ENCODE measurements at regions of chr9 and their contacts with region 1.

Region 1: DNA sequence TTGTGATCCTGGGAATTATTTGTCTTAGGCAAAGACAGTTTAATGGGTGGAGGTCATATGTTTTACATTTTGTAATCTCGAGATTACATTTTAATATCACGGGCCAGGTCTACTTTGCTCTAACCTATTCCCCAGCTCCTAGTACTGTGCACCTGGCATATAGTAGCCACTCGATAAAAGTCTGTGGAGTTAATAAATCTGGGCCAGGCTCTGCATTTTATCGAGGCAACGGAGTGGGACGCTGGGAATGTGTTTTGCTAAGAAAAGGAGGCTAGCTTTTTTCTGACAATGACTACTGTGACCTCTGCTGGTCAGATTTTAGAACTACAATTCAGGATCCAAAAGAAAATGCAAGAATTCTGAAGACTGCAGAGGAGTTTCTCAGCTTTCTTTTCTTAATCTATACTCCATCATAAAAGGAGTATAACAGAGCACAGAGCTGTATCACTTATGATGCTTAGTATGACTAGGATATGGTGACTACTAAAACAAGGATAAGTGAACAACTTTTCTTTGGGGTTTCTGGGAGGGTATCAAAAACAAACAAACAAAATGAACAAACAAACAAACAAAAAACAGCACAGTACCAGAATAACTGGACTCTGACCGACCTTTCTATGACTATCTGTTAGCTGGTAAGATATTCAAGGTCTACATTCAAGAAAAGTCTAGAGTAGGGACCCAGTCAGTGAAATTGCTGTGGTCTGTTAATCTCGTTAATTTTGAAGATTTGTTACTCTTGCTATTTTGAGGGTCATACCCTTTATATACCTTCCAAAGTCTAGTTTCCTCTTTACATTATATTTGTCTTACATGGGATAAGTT is 46.1 kb upstream of the CER1 start:
- DNase-seq: peak; percentile 69
- H3K4me3 Mint-ChIP-seq: no peak overlapping the region
- H3K27ac Mint-ChIP-seq: no peak overlapping the region
- H3K4me1 Mint-ChIP-seq: no peaks in the 10 kb centered on the region
- H3K27me3 Mint-ChIP-seq: peaks cover 17% of the 10 kb centered on the region

Region 2: DNA sequence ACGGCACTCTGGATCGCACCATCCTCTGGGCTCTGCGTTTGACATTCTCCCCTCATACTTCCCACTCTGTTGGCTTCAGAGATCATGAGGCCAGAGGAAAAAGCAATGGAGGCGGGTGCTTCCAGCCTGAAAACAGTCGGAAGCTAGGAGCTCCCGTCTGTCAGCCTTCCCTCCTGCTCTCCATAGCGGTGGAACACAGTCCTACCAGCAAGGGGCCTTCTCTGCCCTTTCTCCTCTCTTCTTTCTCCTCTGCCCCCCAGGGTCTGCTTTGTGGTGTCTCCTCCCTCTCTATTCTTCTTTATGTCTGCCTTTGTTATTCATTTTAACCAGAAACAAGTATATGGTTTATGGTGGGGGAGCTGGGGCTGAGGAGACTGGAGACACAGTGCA is 302.2 kb before region 1 on chr9:
- intact Hi-C with region 1: loop called (anchors 10 kb)
- DNase-seq: no peak
- H3K4me3 Mint-ChIP-seq: no peak overlapping the region
- H3K27ac Mint-ChIP-seq: no peak overlapping the region
- H3K4me1 Mint-ChIP-seq: no peaks in the 10 kb centered on the region
- H3K27me3 Mint-ChIP-seq: no peaks in the 10 kb centered on the region

Region 3: DNA sequence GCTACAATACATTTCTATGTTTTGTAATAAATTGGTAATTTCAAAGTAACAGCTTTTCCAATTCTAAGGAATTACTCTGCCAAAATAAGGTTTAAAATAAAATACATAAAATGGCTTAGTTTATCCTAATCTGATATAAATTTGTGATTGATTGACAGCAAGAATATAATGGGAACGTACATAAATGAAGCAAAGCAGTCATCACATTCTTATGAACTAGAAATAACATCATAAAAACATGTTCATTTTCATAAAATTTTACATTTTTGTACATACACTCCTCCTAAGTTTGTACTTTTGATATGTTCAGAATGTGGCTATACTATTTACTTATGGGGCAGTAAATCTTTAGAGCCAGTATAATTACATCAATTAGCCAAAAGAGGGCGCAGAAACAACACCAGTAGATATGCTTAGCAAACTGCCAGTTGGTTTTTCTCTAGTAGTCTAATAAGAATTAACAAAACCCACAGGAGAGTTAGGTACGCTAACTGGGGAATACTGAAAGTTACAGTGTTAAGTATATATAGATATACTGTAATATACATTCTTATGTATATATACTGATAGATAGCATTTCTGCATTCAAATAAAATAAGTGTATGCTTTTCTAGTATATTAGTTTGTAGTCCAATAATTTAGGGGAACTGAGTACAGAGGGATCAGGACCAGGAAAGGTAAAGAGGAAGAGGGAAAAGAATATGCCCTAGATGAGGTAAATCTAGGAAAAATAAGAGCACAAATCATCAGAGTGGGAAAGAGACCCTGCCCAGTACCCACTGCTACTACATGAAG is 152.2 kb before region 1 on chr9:
- intact Hi-C with region 1: loop called (anchors 1 kb)
- DNase-seq: no peak
- H3K4me3 Mint-ChIP-seq: no peak overlapping the region
- H3K27ac Mint-ChIP-seq: no peak overlapping the region
- H3K4me1 Mint-ChIP-seq: no peaks in the 10 kb centered on the region
- H3K27me3 Mint-ChIP-seq: no peaks in the 10 kb centered on the region